ENCODE measurements at regions of chr13 and their contacts with region 1.

Region 1: GRCh38 chr13:21616880-21617279 is 12.9 kb upstream of the MICU2 start:
- DNase-seq: no peak
- ATAC-seq: no peak
- H3K4me3 Mint-ChIP-seq: no peak overlapping the region
- H3K27ac Mint-ChIP-seq: no peak overlapping the region
- H3K4me1 Mint-ChIP-seq: no peaks in the 10 kb centered on the region
- H3K27me3 Mint-ChIP-seq: peaks cover 13% of the 10 kb centered on the region

Region 2: GRCh38 chr13:21638319-21639282 is 21.7 kb after region 1 on chr13:
- CTCF ChIA-PET with region 1: interaction called, 17 read pairs
- POLR2A ChIA-PET with region 1: no interaction called
- intact Hi-C with region 1: no loop called
- DNase-seq: peak; percentile 39
- ATAC-seq: no peak
- H3K4me3 Mint-ChIP-seq: no peak overlapping the region
- H3K27ac Mint-ChIP-seq: no peak overlapping the region
- H3K4me1 Mint-ChIP-seq: no peaks in the 10 kb centered on the region
- H3K27me3 Mint-ChIP-seq: peaks cover 2% of the 10 kb centered on the region

Region 3: GRCh38 chr13:22210134-22210930 is 593.5 kb after region 1 on chr13:
- CTCF ChIA-PET with region 1: no interaction called
- POLR2A ChIA-PET with region 1: no interaction called
- intact Hi-C with region 1: no loop called
- DNase-seq: no peak
- ATAC-seq: no peak
- H3K4me3 Mint-ChIP-seq: no peak overlapping the region
- H3K27ac Mint-ChIP-seq: no peak overlapping the region
- H3K4me1 Mint-ChIP-seq: peaks cover 11% of the 10 kb centered on the region
- H3K27me3 Mint-ChIP-seq: no peaks in the 10 kb centered on the region

Measured in activated CD4-positive, alpha-beta T cell treated with anti-CD3 and anti-CD28 coated beads for 36 hours (primary cell).